Heart left ventricle (tissue), 16 donors: ENCODE measurements at regions of chr6 and their contacts with region 1.

Region 1: GRCh38 chr6:18019539-18020534 is 32.4 kb upstream of the KIF13A start:
- DNase-seq: peak in 1 of 5 donors; percentile 28
- ATAC-seq: peak in 2 of 4 donors; percentile 79 to 83
- H3K4me3 ChIP-seq: peak overlapping the region in 8 of 12 donors; percentile 7 to 38 (median 20)
- H3K27ac ChIP-seq: no peak overlapping the region
- H3K4me1 ChIP-seq: peaks cover 0 to 5% (median 0%) of the 10 kb centered on the region in 12 donors
- H3K27me3 ChIP-seq: peaks cover 0 to 4% (median 0%) of the 10 kb centered on the region in 9 donors
- CTCF ChIP-seq: no peak
- POLR2A ChIP-seq: no peak

Region 2: GRCh38 chr6:18053078-18053477 is 33.2 kb after region 1 on chr6:
- intact Hi-C with region 1: no loop called
- DNase-seq: no peak
- ATAC-seq: no peak
- H3K4me3 ChIP-seq: no peak overlapping the region
- H3K27ac ChIP-seq: no peak overlapping the region
- H3K4me1 ChIP-seq: peaks cover 0 to 5% (median 0%) of the 10 kb centered on the region in 12 donors
- H3K27me3 ChIP-seq: no peaks in the 10 kb centered on the region
- CTCF ChIP-seq: no peak
- POLR2A ChIP-seq: no peak

Region 3: DNA sequence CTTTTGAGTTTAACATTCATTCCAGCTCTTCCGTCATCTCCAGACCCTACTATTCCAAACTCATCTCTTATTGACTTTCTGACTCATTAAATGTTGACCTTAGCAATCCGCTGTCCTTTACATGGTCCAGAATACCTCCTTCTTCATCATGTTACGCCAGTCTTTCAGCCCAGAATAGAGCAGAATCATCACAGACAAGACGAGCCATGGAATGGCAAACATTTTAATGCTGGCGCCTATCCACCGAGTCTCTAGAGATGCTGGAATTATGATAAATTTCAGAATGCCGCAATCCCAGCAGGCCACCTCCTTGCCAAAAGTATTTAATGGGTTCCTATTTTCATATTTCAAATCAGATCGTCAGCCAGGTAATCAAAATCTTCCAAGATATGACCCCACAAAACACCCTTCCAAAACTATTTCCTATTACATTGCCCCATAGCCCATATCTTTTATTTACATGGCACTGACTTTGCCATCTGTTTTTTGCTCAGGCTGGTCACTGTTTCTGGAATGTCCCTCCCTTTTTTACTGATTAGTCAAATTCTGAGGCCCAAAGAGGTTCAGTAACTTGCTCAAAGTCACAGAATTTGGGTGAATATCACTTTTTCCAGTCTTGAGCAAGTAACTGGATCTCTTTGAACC is 61.6 kb after region 1 on chr6:
- intact Hi-C with region 1: loop called in 1 of 10 experiments (anchors 10 kb)
- DNase-seq: no peak
- ATAC-seq: no peak
- H3K4me3 ChIP-seq: no peak overlapping the region
- H3K27ac ChIP-seq: no peak overlapping the region
- H3K4me1 ChIP-seq: no peaks in the 10 kb centered on the region
- H3K27me3 ChIP-seq: no peaks in the 10 kb centered on the region
- CTCF ChIP-seq: no peak
- POLR2A ChIP-seq: no peak

Region 4: DNA sequence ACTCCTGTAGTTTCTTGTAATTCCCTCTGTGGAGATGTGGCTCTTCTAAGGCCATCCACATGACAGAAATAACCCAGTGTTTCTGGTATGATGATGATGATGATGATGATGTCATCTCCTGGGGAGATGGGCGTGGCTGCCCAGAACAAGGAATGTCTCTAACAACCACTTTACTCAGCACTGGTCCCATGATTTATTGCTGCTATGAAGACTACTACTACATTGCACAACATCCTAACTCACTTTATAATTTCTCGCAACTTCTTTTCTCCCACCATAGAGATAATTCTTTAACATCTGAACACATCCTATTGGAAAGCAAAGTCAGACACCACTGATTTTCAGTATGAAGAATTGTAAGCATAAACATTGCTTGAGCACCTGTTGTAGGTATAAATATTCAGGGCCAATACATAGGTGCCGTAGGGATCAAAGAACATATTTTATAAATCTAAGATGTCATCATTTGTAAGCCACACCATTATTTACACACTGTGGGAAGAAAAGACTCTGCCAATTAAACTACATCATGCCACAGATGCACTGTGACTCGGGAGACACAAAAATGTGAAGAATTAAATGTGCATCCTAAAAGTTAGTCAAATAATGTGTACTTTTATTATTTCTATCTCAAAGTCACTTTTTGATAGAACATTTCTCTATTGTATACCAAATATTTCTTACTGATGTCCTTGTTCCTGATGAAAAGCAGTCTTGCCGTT is 128.6 kb after region 1 on chr6:
- intact Hi-C with region 1: no loop called
- DNase-seq: no peak
- ATAC-seq: no peak
- H3K4me3 ChIP-seq: no peak overlapping the region
- H3K27ac ChIP-seq: no peak overlapping the region
- H3K4me1 ChIP-seq: peaks cover 0 to 17% (median under 1%) of the 10 kb centered on the region in 12 donors
- H3K27me3 ChIP-seq: no peaks in the 10 kb centered on the region
- CTCF ChIP-seq: no peak
- POLR2A ChIP-seq: no peak